ENCODE measurements at regions of chr10 and their contacts with region 1.

Region 1: GRCh38 chr10:28393966-28394568 is 91.2 kb upstream of the MPP7 start:
- DNase-seq: peak; percentile 78
- H3K4me3 Mint-ChIP-seq: no peak overlapping the region
- H3K27ac Mint-ChIP-seq: no peak overlapping the region
- H3K4me1 Mint-ChIP-seq: peaks cover 4% of the 10 kb centered on the region
- H3K27me3 Mint-ChIP-seq: peaks cover 10% of the 10 kb centered on the region

Region 2: GRCh38 chr10:28241741-28242399 is 152.2 kb before region 1 on chr10:
- CTCF ChIA-PET with region 1: interaction called, 22 read pairs
- DNase-seq: peak; percentile 54
- H3K4me3 Mint-ChIP-seq: no peak overlapping the region
- H3K27ac Mint-ChIP-seq: no peak overlapping the region
- H3K4me1 Mint-ChIP-seq: peaks cover 16% of the 10 kb centered on the region
- H3K27me3 Mint-ChIP-seq: no peaks in the 10 kb centered on the region

Region 3: DNA sequence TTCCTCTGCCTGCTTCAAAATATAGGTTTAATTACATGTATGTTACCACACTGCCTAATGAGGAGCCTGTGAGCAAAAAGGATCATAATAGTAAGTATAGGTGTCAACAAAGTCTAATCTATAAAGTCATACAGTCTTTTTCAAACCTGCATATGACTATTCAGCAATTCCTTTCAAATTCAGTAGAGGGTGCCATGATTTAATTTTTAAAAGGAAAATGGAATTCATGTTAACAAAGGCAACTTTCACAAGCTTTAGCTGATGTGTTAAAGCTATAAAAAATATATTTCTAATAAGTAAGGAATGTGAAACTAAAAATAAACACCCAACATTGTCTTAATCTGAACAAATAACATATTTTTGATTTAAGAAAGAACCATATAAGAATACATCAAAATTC is 143.3 kb before region 1 on chr10:
- CTCF ChIA-PET with region 1: interaction called, 40 read pairs
- DNase-seq: no peak
- H3K4me3 Mint-ChIP-seq: no peak overlapping the region
- H3K27ac Mint-ChIP-seq: no peak overlapping the region
- H3K4me1 Mint-ChIP-seq: peaks cover 21% of the 10 kb centered on the region
- H3K27me3 Mint-ChIP-seq: no peaks in the 10 kb centered on the region

Measured in activated naive CD4-positive, alpha-beta T cell treated with anti-CD3 and anti-CD28 coated beads, Interleukin-2, amount 10 ng/mL, durations not matched to agents 7 days and 5 days (primary cell).